ENCODE measurements at regions of chr17 and their contacts with region 1.

Region 1: GRCh38 chr17:33416131-33416530 is 123.0 kb upstream of the ASIC2 start:
- DNase-seq: no peak
- H3K4me3 ChIP-seq: no peak overlapping the region
- H3K27ac ChIP-seq: no peak overlapping the region
- H3K4me1 ChIP-seq: no peaks in the 10 kb centered on the region
- H3K27me3 ChIP-seq: no peaks in the 10 kb centered on the region
- CTCF ChIP-seq: no peak
- EP300 ChIP-seq: no peak
- POLR2A ChIP-seq: no peak

Region 2: DNA sequence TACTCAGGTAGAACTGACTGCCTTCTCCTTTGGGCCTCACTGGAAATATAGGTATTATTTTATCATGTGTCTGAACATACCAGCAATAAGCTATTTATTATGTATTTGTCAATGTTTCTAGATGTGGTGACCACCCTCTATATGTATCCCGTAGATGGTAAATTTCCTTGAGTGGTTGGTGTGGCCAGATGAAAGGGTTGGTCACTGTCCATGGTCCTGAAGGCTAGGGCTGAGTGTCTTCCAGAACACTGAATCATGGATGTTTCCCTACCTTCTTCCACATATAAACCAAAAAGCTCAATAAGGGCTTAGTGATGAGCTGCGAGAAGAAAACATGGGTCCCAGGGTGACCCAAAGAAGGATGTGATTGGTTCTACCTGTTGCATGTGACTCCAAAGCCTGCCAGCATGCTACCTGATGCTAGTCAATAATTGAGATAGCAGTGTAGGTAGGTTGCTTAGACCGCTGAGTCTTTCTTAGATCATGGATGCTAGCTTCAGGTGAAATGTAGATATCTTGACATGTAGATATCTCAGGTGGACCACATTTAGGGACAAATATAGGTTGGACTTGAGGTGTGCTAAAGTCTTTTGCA is 273.3 kb before region 1 on chr17:
- intact Hi-C with region 1: loop called in 1 of 4 experiments (anchors 10 kb)
- DNase-seq: no peak
- H3K4me3 ChIP-seq: no peak overlapping the region
- H3K27ac ChIP-seq: no peak overlapping the region
- H3K4me1 ChIP-seq: no peaks in the 10 kb centered on the region
- H3K27me3 ChIP-seq: no peaks in the 10 kb centered on the region
- CTCF ChIP-seq: no peak
- EP300 ChIP-seq: no peak
- POLR2A ChIP-seq: no peak

Region 3: GRCh38 chr17:33292184-33292980 is 123.7 kb before region 1 on chr17:
- intact Hi-C with region 1: no loop called
- DNase-seq: peak in 2 of 5 donors; percentile 39 to 42
- H3K4me3 ChIP-seq: peak overlapping the region; percentile 12
- H3K27ac ChIP-seq: no peak overlapping the region
- H3K4me1 ChIP-seq: peaks cover 6% of the 10 kb centered on the region
- H3K27me3 ChIP-seq: no peaks in the 10 kb centered on the region
- CTCF ChIP-seq: no peak
- EP300 ChIP-seq: no peak
- POLR2A ChIP-seq: no peak

Region 4: DNA sequence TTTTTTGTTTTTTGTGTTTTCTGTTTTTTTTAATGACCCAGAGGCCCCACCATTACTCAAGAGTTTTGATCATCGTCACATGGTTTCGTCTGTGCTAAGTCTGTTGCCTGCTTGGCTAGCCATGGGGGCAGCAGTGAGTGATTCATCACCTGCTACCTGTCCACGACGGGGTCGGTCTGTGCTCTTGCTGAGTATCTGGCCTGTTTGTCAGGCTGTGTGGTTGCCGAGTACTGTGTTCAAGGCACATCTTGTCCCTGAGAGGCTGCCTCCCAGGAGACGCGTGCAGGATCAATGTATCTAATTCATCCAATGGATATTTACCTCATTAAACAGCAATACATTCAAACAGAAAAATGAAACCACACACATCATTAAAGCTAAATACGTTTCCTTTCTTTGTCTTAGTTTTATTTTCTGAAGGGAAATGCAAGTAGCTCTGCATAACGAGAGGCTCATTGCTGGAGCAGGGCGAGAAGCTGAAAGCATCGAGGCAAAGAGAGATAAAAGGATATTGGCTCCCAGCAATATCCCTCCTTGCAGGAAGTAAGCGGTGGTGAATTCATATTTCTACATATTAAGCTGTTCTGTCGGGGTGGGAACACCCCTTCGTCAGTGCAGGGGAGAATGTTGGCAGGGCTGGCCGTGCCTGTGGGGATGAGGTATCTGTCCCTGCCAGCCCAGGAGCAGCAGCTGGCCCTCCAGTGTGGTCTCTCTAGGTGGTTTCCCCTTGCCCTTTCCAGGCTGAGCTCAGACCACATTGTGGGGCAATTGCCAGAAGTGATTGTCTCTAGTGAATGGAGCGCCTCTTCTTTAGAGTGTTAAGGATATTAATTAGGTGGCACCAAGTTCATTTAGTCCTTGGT is 43.2 kb after region 1 on chr17:
- intact Hi-C with region 1: no loop called
- DNase-seq: no peak
- H3K4me3 ChIP-seq: no peak overlapping the region
- H3K27ac ChIP-seq: no peak overlapping the region
- H3K4me1 ChIP-seq: no peaks in the 10 kb centered on the region
- H3K27me3 ChIP-seq: no peaks in the 10 kb centered on the region
- CTCF ChIP-seq: no peak
- EP300 ChIP-seq: no peak
- POLR2A ChIP-seq: no peak

Region 5: DNA sequence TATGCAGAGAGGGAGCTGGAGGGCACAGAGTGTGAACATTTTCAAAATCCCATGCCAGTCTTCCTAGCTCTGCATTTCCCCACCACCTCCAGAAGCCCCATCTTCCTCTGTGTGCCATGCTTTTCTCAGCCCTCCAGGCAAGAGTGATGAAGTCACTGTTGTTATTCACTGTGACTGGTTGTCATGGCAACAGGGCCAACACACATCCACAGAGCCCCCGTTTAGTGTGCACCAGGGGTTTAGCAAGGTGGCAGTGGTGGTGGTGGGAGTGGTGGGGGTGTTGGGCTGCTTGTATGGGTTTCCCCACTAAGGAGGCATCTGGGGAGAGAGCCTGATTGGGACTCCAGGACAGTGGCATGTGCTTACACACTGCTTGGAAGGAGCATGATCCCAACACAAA is 186.8 kb after region 1 on chr17:
- intact Hi-C with region 1: loop called in 1 of 4 experiments (anchors 10 kb)
- DNase-seq: no peak
- H3K4me3 ChIP-seq: no peak overlapping the region
- H3K27ac ChIP-seq: no peak overlapping the region
- H3K4me1 ChIP-seq: no peaks in the 10 kb centered on the region
- H3K27me3 ChIP-seq: no peaks in the 10 kb centered on the region
- CTCF ChIP-seq: no peak
- EP300 ChIP-seq: no peak
- POLR2A ChIP-seq: no peak

Measured in ovary (tissue), 10 donors.